Activated B cell treated with CpG ODN at 0.5 μM for 24 hours (primary cell): ENCODE measurements at regions of chr7 and their contacts with region 1.

Region 1: DNA sequence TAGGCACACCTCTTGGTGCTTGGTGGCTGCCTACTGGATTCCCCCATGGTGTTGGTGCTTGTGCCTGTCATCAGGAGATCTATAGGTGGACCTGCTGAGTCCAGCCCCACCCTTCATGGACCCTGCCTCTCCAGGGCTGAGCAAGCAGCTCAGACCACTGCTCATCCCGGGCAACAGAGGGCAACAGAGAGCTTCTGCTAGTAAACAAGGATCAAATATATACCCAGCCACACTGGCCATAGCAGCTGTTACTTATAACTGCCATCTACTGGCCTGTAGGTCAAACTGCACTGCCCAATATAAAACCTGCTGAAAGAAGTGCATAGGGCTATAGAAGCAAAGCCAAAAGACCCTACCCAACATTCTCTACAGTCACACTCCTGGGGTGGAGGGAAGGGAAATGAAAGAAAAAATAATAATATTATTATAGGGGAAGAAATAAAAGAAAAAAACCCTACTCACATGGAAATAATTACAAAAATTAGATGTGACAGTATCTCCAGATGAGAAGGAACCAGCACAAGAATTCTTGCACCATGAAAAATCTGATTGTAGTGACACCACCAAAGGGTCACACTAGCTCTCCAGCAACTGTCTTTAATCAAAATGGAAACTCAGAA is 54.9 kb upstream of the ZNF800 start:
- DNase-seq: peak; percentile 31
- ATAC-seq: peak; percentile 100
- H3K4me3 Mint-ChIP-seq: no peak overlapping the region
- H3K27ac Mint-ChIP-seq: no peak overlapping the region
- H3K4me1 Mint-ChIP-seq: peaks cover 2% of the 10 kb centered on the region
- H3K27me3 Mint-ChIP-seq: peaks cover 34% of the 10 kb centered on the region
- CTCF ChIP-seq: no peak

Region 2: GRCh38 chr7:126803060-126803665 is 644.3 kb before region 1 on chr7:
- CTCF ChIA-PET with region 1: interaction called, 11 read pairs
- POLR2A ChIA-PET with region 1: no interaction called
- intact Hi-C with region 1: no loop called
- DNase-seq: no peak
- ATAC-seq: no peak
- H3K4me3 Mint-ChIP-seq: no peak overlapping the region
- H3K27ac Mint-ChIP-seq: no peak overlapping the region
- H3K4me1 Mint-ChIP-seq: no peaks in the 10 kb centered on the region
- H3K27me3 Mint-ChIP-seq: no peaks in the 10 kb centered on the region
- CTCF ChIP-seq: no peak

Region 3: DNA sequence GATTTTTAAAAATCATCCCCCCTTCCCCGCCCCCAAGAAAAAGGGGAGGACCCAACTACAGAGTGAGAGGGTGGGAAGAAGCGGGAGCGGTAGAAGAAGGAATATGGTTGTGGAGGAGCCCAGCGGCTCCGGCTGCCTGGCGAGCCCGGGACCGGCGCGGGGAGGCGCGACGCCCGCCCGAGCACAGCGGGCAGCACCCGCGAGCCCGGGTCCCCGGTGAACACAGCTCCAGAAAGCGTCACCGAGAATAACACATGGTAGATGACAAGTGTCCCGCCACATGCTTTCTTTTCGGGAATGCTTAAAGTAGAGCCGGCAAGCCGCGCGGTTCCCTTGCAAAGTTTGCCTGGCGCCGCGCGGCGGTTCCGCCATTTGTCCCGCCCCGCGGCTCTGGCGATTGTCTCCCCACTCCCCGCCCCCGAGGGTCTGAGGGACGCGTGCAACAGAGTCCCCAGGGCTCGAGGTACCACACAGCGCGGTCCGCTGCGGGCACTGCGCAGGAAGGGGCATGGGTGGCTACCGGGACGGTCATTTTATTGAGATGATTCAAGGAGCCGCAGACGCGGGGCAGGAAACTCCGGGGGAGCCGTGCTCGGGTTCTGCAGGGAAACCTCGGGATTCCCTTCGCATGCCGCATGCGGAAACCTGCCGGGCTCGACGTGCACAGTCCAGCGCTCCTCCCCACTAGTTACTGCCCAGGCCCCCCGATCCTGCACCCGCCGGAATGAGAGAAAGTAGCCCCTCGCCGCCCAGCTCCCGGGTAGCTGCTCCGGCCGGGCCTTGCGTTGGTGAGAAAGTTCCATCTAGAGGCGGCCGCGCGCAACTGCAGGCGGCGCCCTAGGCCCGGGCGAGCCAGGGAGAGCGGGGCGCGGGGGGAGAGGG is 193.9 kb before region 1 on chr7:
- CTCF ChIA-PET with region 1: interaction called, 5 read pairs
- POLR2A ChIA-PET with region 1: no interaction called
- intact Hi-C with region 1: loop called (anchors 5 kb)
- DNase-seq: peak; percentile 58
- ATAC-seq: peak; percentile 88
- H3K4me3 Mint-ChIP-seq: peak overlapping the region; percentile 88
- H3K27ac Mint-ChIP-seq: no peak overlapping the region
- H3K4me1 Mint-ChIP-seq: peaks cover 25% of the 10 kb centered on the region
- H3K27me3 Mint-ChIP-seq: peaks cover 67% of the 10 kb centered on the region
- CTCF ChIP-seq: peak; percentile 54

Region 4: DNA sequence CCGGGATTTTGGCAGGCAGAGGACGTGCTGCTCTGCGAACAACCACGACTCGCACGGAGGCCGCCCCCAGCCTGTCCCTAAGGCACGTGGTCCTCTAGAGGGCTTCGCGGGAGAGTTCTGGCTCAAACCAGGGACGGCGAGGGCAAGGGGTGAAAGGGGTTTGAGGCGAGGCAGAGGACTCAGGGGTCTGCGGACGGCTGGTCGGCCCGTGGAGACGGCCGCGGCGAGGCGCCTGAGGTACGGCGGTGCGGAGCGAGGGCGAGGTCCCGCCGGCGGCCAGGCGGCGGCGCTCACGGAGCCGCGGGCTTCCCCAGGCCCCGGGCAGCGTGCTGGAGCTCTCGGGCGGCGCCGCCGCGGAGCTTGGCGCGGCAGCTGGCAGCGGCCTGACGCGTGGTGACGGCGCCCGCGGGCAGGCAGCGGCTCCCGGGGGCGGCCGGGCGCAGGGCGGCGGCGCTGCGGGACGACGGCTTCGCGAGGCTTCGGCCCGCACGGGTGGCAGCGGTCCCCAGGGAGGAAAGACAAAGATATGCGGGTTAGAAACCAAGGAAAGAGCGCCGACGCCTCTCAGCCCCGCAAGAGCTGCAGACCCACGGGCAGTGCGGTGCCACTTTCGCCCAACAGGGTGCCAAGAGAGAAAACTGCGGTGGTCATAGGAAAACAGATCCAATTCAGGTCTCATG is 99.7 kb before region 1 on chr7:
- CTCF ChIA-PET with region 1: interaction called, 59 read pairs
- POLR2A ChIA-PET with region 1: interaction called, 3 read pairs
- intact Hi-C with region 1: loop called (anchors 1 kb)
- DNase-seq: peak; percentile 73
- ATAC-seq: peak; percentile 98
- H3K4me3 Mint-ChIP-seq: peak overlapping the region; percentile 68
- H3K27ac Mint-ChIP-seq: no peak overlapping the region
- H3K4me1 Mint-ChIP-seq: peaks cover 16% of the 10 kb centered on the region
- H3K27me3 Mint-ChIP-seq: no peaks in the 10 kb centered on the region
- CTCF ChIP-seq: no peak

Region 5: DNA sequence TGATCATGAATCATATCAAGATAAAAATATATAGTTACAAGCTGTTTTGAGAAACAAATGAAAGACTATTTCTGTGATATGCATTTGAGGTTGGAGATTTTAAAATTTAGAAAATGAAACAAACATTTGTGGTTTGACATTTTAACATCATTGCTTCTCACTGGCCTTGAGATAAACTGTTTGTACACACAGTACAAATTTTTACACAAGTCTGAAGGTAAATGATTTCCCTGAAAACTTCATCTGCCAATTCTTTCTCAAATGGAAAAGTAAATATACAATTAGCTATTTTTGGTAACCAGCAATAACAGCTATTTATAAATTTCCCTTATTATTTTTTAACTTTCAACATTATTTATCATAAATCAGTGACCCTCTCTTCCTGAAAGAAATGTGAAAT is 93.5 kb before region 1 on chr7:
- CTCF ChIA-PET with region 1: interaction called, 59 read pairs
- POLR2A ChIA-PET with region 1: no interaction called
- intact Hi-C with region 1: no loop called
- DNase-seq: no peak
- ATAC-seq: no peak
- H3K4me3 Mint-ChIP-seq: no peak overlapping the region
- H3K27ac Mint-ChIP-seq: no peak overlapping the region
- H3K4me1 Mint-ChIP-seq: peaks cover 5% of the 10 kb centered on the region
- H3K27me3 Mint-ChIP-seq: no peaks in the 10 kb centered on the region
- CTCF ChIP-seq: no peak

Region 6: GRCh38 chr7:127413962-127414361 is 33.5 kb before region 1 on chr7:
- CTCF ChIA-PET with region 1: interaction called, 7 read pairs
- POLR2A ChIA-PET with region 1: interaction called, 3 read pairs
- intact Hi-C with region 1: loop called (anchors 2 kb)
- DNase-seq: no peak
- ATAC-seq: peak; percentile 67
- H3K4me3 Mint-ChIP-seq: peak overlapping the region; percentile 16
- H3K27ac Mint-ChIP-seq: peak overlapping the region; percentile 76
- H3K4me1 Mint-ChIP-seq: peaks cover 75% of the 10 kb centered on the region
- H3K27me3 Mint-ChIP-seq: no peaks in the 10 kb centered on the region
- CTCF ChIP-seq: no peak

Region 7: DNA sequence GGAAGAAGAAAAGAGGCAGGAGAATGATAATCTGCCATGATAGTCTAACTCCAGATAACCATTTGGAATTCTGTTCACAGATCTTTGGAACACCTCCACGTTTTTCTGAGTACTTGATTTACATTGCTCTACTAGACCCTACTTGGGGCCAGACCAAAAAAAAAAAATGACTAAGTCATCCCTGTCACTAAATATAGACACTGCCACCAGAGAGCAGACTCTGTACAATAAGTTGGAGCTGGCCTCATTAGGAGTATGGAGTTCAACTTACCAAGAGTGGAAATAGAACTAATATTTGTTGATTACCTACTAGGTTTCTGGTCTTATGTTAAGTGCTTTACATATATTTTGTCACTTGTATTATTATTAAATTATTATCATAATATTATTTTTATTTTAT is 26.0 kb after region 1 on chr7:
- CTCF ChIA-PET with region 1: no interaction called
- POLR2A ChIA-PET with region 1: no interaction called
- intact Hi-C with region 1: no loop called
- DNase-seq: no peak
- ATAC-seq: no peak
- H3K4me3 Mint-ChIP-seq: no peak overlapping the region
- H3K27ac Mint-ChIP-seq: no peak overlapping the region
- H3K4me1 Mint-ChIP-seq: no peaks in the 10 kb centered on the region
- H3K27me3 Mint-ChIP-seq: peaks cover 35% of the 10 kb centered on the region
- CTCF ChIP-seq: no peak

Region 8: DNA sequence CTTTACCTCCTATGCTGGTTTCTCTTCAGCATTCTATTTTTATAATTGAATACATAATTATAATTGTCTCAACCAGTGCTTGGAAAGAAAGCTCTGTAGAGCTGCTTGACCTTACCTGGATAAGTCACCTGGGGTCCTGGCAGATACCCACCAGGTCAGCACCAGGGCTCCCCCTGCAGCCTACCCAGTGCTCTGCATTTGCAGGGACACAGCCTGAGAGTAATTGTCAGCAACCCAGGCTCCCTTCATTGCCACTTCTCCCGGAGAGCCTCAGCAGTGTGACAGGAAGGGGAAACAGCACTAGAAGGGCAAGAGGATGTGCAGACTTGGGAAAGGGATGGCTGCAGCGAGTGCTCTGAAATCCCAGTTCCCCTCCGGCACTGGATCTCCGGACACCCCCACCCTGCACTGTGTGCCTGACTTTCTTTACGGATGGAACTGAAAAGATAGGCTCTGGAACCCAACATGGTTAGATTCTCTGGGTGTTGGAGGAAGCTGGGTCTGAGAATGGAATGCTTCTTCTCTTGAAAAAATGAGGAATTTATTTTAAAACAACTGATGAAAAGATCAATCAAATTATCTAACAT is 181.9 kb after region 1 on chr7:
- CTCF ChIA-PET with region 1: no interaction called
- POLR2A ChIA-PET with region 1: no interaction called
- intact Hi-C with region 1: loop called (anchors 1 kb)
- DNase-seq: no peak
- ATAC-seq: peak; percentile 49
- H3K4me3 Mint-ChIP-seq: no peak overlapping the region
- H3K27ac Mint-ChIP-seq: no peak overlapping the region
- H3K4me1 Mint-ChIP-seq: no peaks in the 10 kb centered on the region
- H3K27me3 Mint-ChIP-seq: peaks cover 30% of the 10 kb centered on the region
- CTCF ChIP-seq: no peak